ENCODE measurements at regions of chr15 and their contacts with region 1.

Region 1: DNA sequence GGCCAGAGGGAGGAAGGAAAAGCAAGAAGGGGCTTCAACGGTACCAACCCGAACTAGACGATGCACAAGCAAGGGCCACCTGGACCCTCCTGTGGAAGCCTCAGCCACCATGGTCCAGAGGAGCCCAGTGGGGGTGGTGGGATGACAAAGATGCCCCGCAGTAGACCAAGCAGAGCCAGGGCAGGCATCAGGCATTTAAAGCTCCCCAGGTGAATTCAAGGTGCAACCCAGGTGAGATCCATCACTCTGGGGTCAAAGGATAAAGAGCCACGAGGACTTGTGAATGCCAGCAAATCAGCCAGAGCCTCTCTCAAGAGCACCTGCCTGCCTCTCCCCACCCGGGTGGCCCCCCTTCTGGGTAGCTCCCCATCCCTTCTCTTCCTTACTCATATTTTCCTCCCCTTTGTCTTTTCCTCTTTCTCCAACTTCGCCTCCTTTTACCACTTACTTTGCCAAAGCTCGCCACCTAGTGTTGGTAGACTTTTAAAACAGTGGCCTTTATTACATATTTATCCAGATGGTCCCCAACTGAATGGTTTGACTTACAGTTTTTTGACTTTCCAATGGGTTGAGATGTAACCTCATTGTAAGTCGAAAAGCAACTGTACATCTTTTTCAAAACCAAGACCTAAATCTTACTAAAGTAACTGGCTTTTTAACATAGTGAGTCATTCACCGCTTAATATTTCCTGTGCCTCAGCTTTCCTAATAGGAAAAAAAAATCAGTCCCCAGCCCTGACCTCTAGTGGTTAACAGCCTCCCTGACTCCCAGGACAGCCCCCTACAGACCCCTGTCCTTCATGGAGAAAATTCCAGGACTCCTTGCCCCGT is 18.8 kb downstream of the PLA2G4F start:
- DNase-seq: peak in 5 of 7 donors; percentile 33 to 54 (median 51)
- H3K4me3 ChIP-seq: no peak overlapping the region
- H3K27ac ChIP-seq: no peak overlapping the region
- H3K4me1 ChIP-seq: no peaks in the 10 kb centered on the region
- H3K27me3 ChIP-seq: no peaks in the 10 kb centered on the region
- CTCF ChIP-seq: peak; percentile 51 to 65 (median 60)
- POLR2A ChIP-seq: no peak

Region 2: DNA sequence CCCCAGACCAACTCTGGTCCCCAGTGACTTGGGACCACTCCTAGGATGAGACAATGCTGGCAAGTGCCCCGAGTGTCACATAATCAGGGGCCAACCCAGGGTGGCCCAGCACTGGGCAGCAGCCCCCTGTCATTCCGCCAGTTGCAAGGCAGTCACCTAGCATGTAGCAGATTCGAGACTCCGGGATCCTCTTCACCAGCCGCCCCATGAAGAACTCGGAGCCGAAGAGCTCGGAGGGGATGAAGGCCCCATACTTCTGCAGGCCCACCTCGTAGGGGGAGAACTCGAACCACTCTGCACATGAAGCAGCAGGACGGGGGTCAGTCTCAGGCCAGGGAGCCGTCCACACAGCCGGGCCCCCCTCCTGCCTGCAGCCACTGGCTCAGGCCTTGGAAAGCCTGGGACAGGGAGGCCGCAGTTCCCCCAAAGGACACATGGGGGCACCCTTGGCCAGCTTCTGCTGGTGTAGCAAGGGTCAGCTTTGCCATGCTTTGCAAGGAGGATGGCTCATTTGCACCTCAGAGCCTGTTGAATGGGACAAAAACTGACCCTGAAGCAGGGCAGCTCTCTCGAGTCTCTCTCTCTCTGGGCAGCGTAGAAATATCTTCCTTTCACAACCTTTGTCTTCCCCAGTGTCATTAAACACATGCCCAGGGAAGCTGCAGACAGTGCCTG is 148.2 kb before region 1 on chr15:
- intact Hi-C with region 1: loop called (anchors 5 kb)
- DNase-seq: peak; percentile 78 to 94 (median 87)
- H3K4me3 ChIP-seq: no peak overlapping the region
- H3K27ac ChIP-seq: no peak overlapping the region
- H3K4me1 ChIP-seq: no peaks in the 10 kb centered on the region
- H3K27me3 ChIP-seq: no peaks in the 10 kb centered on the region
- CTCF ChIP-seq: peak; percentile 94 to 98 (median 96)
- POLR2A ChIP-seq: no peak

Region 3: DNA sequence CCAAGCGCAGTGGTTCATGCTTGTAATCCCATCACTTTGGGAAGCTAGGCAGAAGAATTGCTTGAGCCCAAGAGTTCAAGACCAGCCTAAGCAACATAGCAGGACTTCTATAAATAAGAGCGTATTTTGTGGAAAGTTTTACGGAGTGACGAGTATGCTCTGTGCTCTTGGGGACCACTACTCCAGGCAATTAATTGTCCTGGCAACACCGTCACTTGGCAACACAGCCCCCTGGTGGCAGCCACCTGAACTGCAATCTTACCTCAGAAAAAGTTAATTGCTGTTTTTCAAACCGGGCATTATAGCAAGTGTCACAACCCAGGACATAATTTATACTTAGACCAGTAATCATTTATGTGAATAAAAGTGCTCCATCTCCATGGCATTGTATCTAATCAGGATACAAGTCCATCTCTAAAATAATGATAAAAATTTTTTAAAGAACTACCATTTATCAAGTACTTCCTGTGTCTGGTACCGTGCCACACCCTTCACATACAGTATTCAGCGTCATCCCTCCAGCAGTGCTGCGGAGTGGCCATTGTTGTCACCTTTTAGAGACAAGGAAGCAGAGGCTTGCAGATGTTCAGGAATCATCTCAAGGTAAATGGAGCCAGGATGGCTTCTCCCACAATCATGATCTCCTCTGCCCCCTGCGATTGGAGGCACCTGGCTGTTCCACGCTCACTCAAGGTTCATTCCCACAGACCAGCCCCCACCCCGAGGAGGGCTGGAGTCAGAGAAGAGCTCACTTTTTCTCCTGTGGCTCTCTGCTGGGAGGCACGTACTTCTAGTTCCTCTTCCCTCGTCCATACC is 77.8 kb before region 1 on chr15:
- intact Hi-C with region 1: loop called (anchors 2 to 5 kb)
- DNase-seq: peak in 6 of 7 donors; percentile 43 to 78 (median 61)
- H3K4me3 ChIP-seq: no peak overlapping the region
- H3K27ac ChIP-seq: no peak overlapping the region
- H3K4me1 ChIP-seq: peaks cover 0 to 6% of the 10 kb centered on the region in 2 donors
- H3K27me3 ChIP-seq: no peaks in the 10 kb centered on the region
- CTCF ChIP-seq: peak; percentile 82 to 90 (median 84)
- POLR2A ChIP-seq: no peak

Region 4: DNA sequence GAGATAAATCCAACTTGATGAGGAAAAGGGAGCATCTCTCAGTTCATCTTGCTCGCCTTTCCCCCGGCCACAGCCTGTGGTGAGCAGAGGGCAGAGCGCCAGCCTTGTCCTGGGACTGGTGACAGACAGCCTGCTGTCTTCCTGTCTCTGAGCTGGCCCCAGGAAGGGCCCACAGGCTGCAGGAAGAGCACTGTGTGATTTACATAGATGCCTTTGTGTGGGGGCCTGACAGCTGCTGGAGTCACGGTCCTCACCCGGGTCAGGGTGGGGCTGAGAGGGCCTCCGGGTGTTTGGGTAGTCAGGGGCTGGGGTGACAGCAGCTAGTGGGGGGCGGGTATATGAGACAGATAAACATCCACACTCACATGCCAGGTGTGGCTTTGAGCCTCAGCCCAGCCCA is 72.6 kb before region 1 on chr15:
- intact Hi-C with region 1: loop called (anchors 2 to 5 kb)
- DNase-seq: peak in 5 of 7 donors; percentile 19 to 57 (median 27)
- H3K4me3 ChIP-seq: no peak overlapping the region
- H3K27ac ChIP-seq: no peak overlapping the region
- H3K4me1 ChIP-seq: peaks cover 0 to 4% of the 10 kb centered on the region in 2 donors
- H3K27me3 ChIP-seq: no peaks in the 10 kb centered on the region
- CTCF ChIP-seq: no peak
- POLR2A ChIP-seq: no peak

Region 5: GRCh38 chr15:42111924-42112323 is 25.7 kb before region 1 on chr15:
- intact Hi-C with region 1: loop called in 1 of 2 experiments (anchors 2 kb)
- DNase-seq: no peak
- H3K4me3 ChIP-seq: no peak overlapping the region
- H3K27ac ChIP-seq: no peak overlapping the region
- H3K4me1 ChIP-seq: no peaks in the 10 kb centered on the region
- H3K27me3 ChIP-seq: no peaks in the 10 kb centered on the region
- CTCF ChIP-seq: no peak
- POLR2A ChIP-seq: no peak

Region 6: DNA sequence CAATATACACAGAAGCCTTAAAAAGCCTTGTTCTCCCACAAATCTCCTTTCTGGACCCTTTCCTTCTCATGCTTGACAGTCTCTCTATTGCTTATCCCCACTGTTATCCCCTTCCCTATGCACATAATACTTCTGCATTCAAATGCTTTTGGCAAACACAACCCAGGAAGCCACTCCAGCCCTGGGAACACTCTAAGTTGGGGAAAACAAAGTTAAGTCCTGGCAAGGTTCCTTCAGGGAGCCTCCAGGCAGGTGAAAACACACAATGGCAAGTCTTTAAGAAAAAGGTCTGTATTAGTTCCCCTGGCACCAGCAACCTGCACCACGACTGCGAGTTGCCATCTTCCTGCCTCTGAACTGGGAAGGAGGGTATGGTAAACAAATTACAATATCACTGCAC is 115.7 kb after region 1 on chr15:
- intact Hi-C with region 1: no loop called
- DNase-seq: no peak
- H3K4me3 ChIP-seq: no peak overlapping the region
- H3K27ac ChIP-seq: no peak overlapping the region
- H3K4me1 ChIP-seq: peaks cover 0 to 10% of the 10 kb centered on the region in 2 donors
- H3K27me3 ChIP-seq: no peaks in the 10 kb centered on the region
- CTCF ChIP-seq: no peak
- POLR2A ChIP-seq: no peak

Measured in adrenal gland (tissue), 19 donors.